ENCODE measurements at regions of chr3 and their contacts with region 1.

Region 1: GRCh38 chr3:73547427-73548248 is 77.1 kb downstream of the PDZRN3 start:
- DNase-seq: peak; percentile 47
- H3K4me3 ChIP-seq: no peak overlapping the region
- CTCF ChIP-seq: no peak

Region 2: DNA sequence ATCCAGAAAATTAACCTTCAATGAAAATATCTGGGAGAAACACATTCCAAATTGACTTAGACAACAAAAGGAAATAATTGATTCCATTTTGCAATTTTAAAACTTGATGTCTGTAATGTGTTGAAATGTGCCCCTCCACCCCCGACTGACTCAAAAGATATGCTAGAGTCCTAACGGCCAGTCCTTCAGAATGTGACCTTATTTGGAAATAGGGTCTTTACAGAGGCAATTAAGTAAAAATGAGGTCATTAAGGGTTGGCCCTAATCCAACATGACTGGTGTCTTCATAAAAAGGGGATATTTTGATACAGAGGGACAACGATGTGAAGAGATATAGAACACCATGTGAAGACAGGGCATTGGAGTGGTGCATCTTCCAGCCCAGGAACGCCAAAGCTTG is 76.8 kb before region 1 on chr3:
- in situ Hi-C with region 1: no loop called
- DNase-seq: no peak
- H3K4me3 ChIP-seq: no peak overlapping the region
- CTCF ChIP-seq: no peak

Region 3: GRCh38 chr3:73848173-73848906 is 300.7 kb after region 1 on chr3:
- in situ Hi-C with region 1: loop called (anchors 25 kb)
- DNase-seq: peak; percentile 32
- H3K4me3 ChIP-seq: no peak overlapping the region
- CTCF ChIP-seq: peak; percentile 74

Measured in astrocyte of the cerebellum (primary cell).